ENCODE measurements at regions of chr7 and their contacts with region 1.

Region 1: DNA sequence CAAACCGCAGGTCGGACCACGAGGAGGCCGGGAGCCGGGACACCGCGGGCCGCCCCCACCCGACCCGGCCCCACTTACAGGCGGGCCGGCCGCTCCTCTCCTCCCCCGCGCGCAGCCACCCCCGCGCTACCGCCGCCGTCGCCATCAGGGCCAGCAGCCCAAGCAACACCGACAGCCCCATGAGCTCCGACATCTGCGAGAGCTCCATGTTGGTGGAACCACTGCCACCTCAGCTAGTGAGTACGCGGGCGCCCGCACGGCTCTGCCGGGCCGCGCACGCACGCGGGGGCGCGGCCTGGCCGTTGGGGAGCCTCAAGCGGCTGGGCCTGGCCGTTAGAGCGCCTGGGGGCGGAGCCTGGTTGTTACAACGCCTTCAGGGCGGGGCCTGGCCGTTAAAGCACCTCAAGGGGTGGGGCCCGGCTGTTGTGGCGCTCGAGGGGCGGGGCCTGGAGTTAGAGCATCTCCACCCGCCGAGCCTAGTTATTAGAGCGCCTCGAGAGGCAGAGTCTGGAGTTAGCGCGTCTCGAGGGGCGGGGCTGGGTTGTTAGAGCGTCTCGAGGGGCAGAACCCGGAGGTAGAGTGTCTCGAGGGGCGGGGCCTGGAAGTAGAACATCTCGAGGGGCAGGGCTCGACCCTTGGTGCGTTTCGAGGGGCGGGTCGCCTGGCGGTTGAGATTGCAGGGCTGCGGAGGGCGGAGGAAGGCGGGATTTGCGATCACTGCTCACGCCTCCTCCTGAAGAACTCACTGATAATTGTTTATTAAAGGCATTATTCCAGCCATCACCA is at the start of gene TBL2:
- DNase-seq: peak; percentile 99
- H3K27ac ChIP-seq: peak within 1 kb of the TSS; percentile 91
- CTCF ChIP-seq: no peak

Region 2: GRCh38 chr7:72405413-72405812 is 1173.1 kb before region 1 on chr7:
- CTCF ChIA-PET with region 1: no interaction called
- POLR2A ChIA-PET with region 1: no interaction called
- DNase-seq: peak; percentile 21
- H3K27ac ChIP-seq: no peak overlapping the region
- CTCF ChIP-seq: no peak

Region 3: DNA sequence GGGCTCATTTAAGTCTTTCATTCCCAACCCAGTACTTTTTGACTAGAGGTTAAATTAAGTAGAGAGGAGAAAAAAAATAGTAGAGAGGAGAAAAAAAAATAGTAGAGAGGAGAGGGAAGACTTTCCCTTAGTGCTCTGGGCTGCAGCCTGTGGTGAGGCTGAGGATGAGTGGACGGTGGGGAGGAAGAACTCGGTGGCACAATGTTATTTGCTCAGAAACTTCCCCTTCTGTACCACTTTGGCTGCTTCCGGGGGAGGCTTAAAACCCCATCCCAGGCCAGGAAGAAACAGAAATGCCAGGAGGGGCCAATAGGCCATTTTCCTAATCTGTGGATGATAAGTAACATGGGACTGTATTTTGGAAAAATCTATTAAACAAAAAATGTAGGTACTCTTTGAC is 60.4 kb after region 1 on chr7:
- CTCF ChIA-PET with region 1: no interaction called
- POLR2A ChIA-PET with region 1: interaction called, 10 read pairs
- DNase-seq: no peak
- H3K27ac ChIP-seq: no peak overlapping the region
- CTCF ChIP-seq: no peak

Region 4: DNA sequence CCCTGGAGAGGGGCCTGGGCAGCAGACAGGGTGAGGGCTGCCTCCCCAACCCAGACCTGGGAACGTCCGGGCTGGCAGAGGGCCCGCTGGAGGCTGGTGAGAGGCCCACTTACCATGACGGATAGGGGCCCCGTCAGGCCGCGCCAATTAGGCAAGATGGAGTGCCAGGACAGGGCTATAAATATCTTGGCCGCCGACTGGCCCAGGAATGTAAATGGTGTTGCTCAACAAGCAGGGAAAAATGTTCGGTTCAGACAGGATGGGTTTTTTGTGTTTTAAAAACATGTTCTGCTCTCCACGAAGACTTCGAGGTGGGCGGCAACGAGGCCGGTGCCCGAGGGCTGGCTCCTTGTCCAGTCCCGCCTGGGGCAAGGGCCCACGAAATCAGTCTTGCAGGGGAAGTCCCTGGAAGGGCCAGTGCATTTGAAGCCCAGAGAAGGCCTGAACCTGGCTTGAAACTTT is 413.6 kb after region 1 on chr7:
- CTCF ChIA-PET with region 1: no interaction called
- POLR2A ChIA-PET with region 1: no interaction called
- DNase-seq: peak; percentile 42
- H3K27ac ChIP-seq: peak overlapping the region; percentile 89
- CTCF ChIP-seq: no peak